Activated naive CD8-positive, alpha-beta T cell treated with anti-CD3 and anti-CD28 coated beads, Interleukin-2, amount 10 ng/mL, durations not matched to agents 7 days and 5 days (primary cell): ENCODE measurements at regions of chr12 and their contacts with region 1.

Region 1: DNA sequence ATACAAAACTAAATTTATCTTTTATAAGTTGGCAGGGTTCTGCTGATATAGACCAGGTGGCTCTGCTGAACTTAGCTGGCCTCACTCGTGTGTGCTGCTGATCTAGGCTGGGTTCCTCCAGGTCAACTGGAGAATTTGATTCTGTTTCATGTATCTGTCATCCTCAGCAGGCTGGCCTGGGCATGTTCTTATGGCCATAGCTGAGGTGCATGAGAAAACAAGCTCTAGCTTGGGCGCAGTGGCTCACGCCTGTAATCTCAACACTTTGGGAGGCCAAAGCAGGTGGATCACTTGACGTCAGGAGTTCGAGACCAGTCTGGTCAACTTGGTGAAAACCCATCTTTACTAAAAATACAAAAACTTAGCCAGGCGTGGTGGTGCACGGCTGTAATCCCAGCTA is 24.3 kb upstream of the BCL2L14 start:
- DNase-seq: no peak
- ATAC-seq: no peak
- H3K4me3 Mint-ChIP-seq: no peak overlapping the region
- H3K27ac Mint-ChIP-seq: no peak overlapping the region
- H3K4me1 Mint-ChIP-seq: no peaks in the 10 kb centered on the region
- H3K27me3 Mint-ChIP-seq: peaks cover 5% of the 10 kb centered on the region

Region 2: GRCh38 chr12:11862798-11863197 is 183.6 kb before region 1 on chr12:
- POLR2A ChIA-PET with region 1: interaction called, 10 read pairs
- DNase-seq: no peak
- ATAC-seq: no peak
- H3K4me3 Mint-ChIP-seq: no peak overlapping the region
- H3K27ac Mint-ChIP-seq: no peak overlapping the region
- H3K4me1 Mint-ChIP-seq: peaks cover 3% of the 10 kb centered on the region
- H3K27me3 Mint-ChIP-seq: no peaks in the 10 kb centered on the region

Region 3: GRCh38 chr12:12070674-12071656 is 24.6 kb after region 1 on chr12 and contains the start of gene BCL2L14:
- POLR2A ChIA-PET with region 1: no interaction called
- DNase-seq: peak; percentile 34
- ATAC-seq: peak; percentile 79
- H3K4me3 Mint-ChIP-seq: peak within 1 kb of the TSS; percentile 84
- H3K27ac Mint-ChIP-seq: peak within 1 kb of the TSS; percentile 90
- H3K4me1 Mint-ChIP-seq: peaks cover 16% of the 10 kb centered on the region
- H3K27me3 Mint-ChIP-seq: no peaks in the 10 kb centered on the region
- total RNA-seq, gene BCL2L14: 3.4 to 4.9 TPM